Left ventricle myocardium inferior (tissue), 1 donor: ENCODE measurements at regions of chr12 and their contacts with region 1.

Region 1: GRCh38 chr12:117212563-117213190 is 22.4 kb upstream of the FBXO21 start:
- DNase-seq: peak; percentile 53
- H3K4me3 ChIP-seq: no peak overlapping the region
- H3K27ac ChIP-seq: no peak overlapping the region
- H3K4me1 ChIP-seq: no peaks in the 10 kb centered on the region
- H3K27me3 ChIP-seq: peaks cover 74% of the 10 kb centered on the region
- CTCF ChIP-seq: peak; percentile 87

Region 2: DNA sequence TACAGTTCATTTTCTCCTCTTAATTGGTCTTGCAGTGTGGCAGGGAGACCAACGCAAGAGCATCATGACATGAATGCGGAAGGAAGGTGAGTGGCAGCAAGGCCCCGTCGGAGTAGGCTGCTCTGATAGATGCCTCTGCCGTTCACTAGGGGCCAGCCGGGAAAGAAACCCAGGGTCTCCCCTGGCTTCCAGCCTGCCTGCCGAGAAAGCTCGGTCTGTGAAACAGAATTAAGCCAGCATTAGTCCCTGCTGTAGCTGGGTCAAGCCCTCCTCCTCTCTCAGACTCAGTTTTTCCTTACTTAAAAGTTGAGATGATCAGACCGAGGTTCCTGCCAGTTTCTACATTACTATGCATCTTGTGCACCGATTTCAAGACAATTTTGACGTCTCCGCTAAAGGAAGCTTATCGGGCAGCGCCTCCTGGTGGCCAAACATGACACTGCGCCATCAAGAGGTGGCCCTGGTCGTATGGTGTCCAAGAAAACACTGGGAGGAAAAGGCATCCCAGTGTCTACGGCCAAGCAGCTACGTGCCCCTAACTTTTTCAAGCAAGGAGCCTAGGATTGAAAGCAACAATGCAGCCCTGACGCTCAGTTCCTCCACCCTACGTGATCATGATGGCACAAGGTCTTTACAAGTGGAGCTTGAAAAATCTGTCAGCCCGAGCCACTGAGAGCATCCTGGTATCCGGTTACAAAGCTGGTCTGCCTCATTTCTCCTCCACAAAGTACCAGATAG is 624.5 kb after region 1 on chr12:
- intact Hi-C with region 1: loop called (anchors 5 kb)
- DNase-seq: peak; percentile 72
- H3K4me3 ChIP-seq: no peak overlapping the region
- H3K27ac ChIP-seq: no peak overlapping the region
- H3K4me1 ChIP-seq: peaks cover 6% of the 10 kb centered on the region
- H3K27me3 ChIP-seq: peaks cover 94% of the 10 kb centered on the region
- CTCF ChIP-seq: peak; percentile 96